ENCODE measurements at regions of chr2 and their contacts with region 1.

Region 1: DNA sequence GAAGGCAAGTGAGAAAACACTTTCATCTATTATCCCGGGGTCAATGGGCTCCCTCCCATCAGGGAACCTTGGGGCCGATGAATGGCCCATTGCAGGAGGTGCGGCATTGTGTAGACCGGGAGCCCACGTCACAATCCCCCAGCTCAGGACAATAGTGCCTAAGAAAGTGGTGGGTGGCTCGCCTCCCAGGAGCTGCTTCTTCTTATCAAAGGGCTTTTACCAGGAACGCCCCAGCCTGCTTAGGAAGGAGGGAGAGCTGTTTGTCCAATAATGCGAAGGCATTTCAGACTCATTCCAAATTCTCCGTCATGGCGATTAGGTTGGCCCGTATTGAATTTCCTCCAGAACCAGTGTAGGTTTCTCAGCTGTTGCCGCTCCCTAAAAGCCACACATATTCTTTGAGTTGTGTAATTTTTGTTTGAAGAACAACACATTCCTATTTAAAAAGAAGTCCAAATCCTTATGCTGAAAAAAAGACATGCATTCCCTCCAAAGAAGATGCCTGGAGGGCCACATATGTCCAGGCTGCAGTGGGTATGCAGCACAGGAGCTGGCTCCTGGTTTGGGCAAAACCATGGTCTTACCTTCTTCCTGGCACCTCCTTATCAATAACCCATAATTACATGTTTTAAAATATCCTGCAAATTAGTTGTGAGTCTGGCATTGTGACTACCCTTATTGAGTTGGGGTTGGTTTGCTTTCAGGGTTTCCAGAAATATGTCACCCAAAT is 264.7 kb downstream of the MYCN start:
- DNase-seq: no peak
- H3K4me3 ChIP-seq: no peak overlapping the region
- H3K27ac ChIP-seq: no peak overlapping the region
- H3K4me1 ChIP-seq: no peaks in the 10 kb centered on the region
- H3K27me3 ChIP-seq: no peaks in the 10 kb centered on the region
- CTCF ChIP-seq: no peak
- POLR2A ChIP-seq: no peak

Region 2: GRCh38 chr2:16055848-16056580 is 149.0 kb before region 1 on chr2:
- intact Hi-C with region 1: loop called (anchors 5 kb)
- DNase-seq: no peak
- H3K4me3 ChIP-seq: no peak overlapping the region
- H3K27ac ChIP-seq: no peak overlapping the region
- H3K4me1 ChIP-seq: no peaks in the 10 kb centered on the region
- H3K27me3 ChIP-seq: no peaks in the 10 kb centered on the region
- CTCF ChIP-seq: no peak
- POLR2A ChIP-seq: no peak

Measured in breast epithelium (tissue), 4 donors.